Esophagus squamous epithelium (tissue), 5 donors: ENCODE measurements at regions of chr4 and their contacts with region 1.

Region 1: DNA sequence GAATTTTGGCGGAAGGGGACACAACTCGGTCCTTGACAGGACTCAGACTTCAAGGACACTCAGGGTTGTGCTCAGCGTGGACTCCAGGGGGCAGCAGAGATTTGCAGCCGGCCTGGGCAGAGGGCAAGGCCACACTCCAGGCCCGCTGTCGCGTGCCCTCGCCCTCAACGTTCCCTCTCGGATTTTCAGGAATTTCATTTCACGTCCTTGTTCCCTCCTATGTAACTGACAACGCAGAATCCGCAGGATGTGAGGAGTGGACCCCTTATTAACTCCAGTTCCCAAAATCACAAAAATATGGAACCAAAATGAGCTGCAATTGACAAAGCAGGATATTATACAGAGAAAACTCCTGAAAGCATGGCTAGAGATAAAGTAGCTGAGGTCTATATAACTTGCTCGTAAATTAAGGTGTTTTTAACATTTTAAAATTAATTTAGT is 21.0 kb upstream of the DCTD start:
- DNase-seq: no peak
- H3K4me3 ChIP-seq: no peak overlapping the region
- H3K27ac ChIP-seq: no peak overlapping the region
- H3K4me1 ChIP-seq: no peaks in the 10 kb centered on the region
- H3K27me3 ChIP-seq: peaks cover 0 to 2% (median 0%) of the 10 kb centered on the region in 4 donors
- CTCF ChIP-seq: peak; percentile 49 to 90 (median 82)
- POLR2A ChIP-seq: no peak

Region 2: GRCh38 chr4:183256756-183257385 is 318.6 kb after region 1 on chr4:
- intact Hi-C with region 1: loop called (anchors 5 kb)
- DNase-seq: no peak
- H3K4me3 ChIP-seq: no peak overlapping the region
- H3K27ac ChIP-seq: peak overlapping the region in 1 of 4 donors; percentile 2
- H3K4me1 ChIP-seq: peaks cover 0 to 6% (median under 1%) of the 10 kb centered on the region in 3 donors
- H3K27me3 ChIP-seq: no peaks in the 10 kb centered on the region
- CTCF ChIP-seq: peak; percentile 38 to 77 (median 64)
- POLR2A ChIP-seq: no peak